ENCODE measurements at regions of chr2 and their contacts with region 1.

Region 1: DNA sequence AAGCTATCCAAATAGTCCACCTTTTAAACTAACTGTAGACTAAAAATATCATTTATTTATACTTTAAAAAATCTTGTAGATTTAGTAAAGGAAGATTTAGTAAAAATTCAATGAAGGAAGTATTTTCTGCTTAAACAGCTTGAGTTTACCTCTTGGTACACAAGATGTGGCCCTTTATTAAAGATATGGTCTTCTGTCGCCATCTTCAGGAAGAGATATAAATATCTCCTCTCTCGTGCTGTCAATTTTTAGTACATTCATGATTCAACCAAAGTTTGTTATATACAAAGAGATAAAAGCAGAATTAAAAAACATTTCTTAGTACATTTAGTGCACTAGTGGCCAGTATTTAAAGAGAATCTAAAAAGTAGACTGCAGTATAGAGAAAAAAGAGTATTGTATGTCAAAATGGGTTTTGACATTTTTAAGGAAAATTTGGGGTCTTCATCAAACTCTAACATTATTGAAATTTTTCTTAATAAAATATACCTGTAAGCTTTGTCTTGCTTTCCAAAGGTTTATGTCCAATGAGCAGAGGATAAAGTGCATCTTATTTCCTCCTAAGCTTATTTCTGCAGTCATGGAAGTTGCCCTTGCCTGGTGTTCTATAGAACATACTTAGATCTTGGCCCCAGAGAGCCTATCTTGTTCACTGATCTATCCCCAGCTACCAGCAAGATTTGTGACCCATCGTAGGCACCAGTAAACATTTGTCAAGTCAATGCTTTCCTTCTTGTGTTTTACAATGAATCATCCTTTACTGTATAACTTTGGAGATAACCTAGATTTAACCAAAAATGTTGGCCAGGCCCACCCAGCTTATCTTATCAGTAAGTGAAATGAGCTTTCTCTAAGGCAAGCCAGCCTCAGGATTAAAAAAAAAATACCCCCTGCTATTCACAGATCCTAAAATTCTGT is 18.5 kb upstream of the EML6 start:
- DNase-seq: peak in 6 of 9 donors; percentile 26 to 69 (median 58)
- ATAC-seq: peak; percentile 74
- H3K4me3 ChIP-seq: no peak overlapping the region
- H3K4me3 Mint-ChIP-seq: no peak overlapping the region
- H3K27ac ChIP-seq: no peak overlapping the region
- H3K27ac Mint-ChIP-seq: no peak overlapping the region
- H3K4me1 ChIP-seq: no peaks in the 10 kb centered on the region
- H3K4me1 Mint-ChIP-seq: peaks cover 0 to 18% (median 0%) of the 10 kb centered on the region in 7 donors
- H3K27me3 ChIP-seq: no peaks in the 10 kb centered on the region
- H3K27me3 Mint-ChIP-seq: peaks cover 10 to 59% (median 15%) of the 10 kb centered on the region in 5 donors

Region 2: DNA sequence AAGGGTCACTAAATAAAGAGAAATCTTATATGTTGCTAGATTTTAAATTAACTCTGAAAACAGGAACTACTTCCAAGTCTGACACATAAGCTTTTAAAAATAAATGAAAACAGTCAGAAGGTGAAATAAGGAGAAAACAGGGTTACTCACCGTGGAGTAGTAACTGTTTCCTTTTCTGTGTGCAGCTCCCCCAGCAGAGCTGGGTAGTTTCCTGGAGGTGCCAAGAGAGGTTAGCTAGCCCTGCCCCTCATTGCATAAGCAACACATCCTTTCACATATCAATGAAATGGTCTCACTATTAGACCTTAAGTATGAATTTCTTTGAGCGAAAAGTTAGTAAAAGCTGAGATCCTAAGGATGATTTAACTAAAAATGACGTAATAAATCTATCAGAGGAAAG is 791.2 kb before region 1 on chr2:
- CTCF ChIA-PET with region 1: interaction called, 3 read pairs
- POLR2A ChIA-PET with region 1: no interaction called
- intact Hi-C with region 1: loop called in 1 of 2 experiments (anchors 10 kb)
- DNase-seq: peak in 5 of 9 donors; percentile 16 to 34 (median 21)
- ATAC-seq: peak; percentile 76
- H3K4me3 ChIP-seq: no peak overlapping the region
- H3K4me3 Mint-ChIP-seq: no peak overlapping the region
- H3K27ac ChIP-seq: no peak overlapping the region
- H3K27ac Mint-ChIP-seq: peak overlapping the region in 7 of 9 donors; percentile 25 to 59 (median 51)
- H3K4me1 ChIP-seq: no peaks in the 10 kb centered on the region
- H3K4me1 Mint-ChIP-seq: peaks cover 8 to 14% (median 9%) of the 10 kb centered on the region in 7 donors
- H3K27me3 ChIP-seq: no peaks in the 10 kb centered on the region
- H3K27me3 Mint-ChIP-seq: no peaks in the 10 kb centered on the region

Region 3: GRCh38 chr2:54206596-54206995 is 498.4 kb before region 1 on chr2:
- CTCF ChIA-PET with region 1: interaction called, 6 read pairs
- POLR2A ChIA-PET with region 1: no interaction called
- intact Hi-C with region 1: loop called in 1 of 2 experiments (anchors 1 kb)
- DNase-seq: peak in 2 of 9 donors; percentile 5 to 11
- ATAC-seq: no peak
- H3K4me3 ChIP-seq: no peak overlapping the region
- H3K4me3 Mint-ChIP-seq: no peak overlapping the region
- H3K27ac ChIP-seq: no peak overlapping the region
- H3K27ac Mint-ChIP-seq: no peak overlapping the region
- H3K4me1 ChIP-seq: no peaks in the 10 kb centered on the region
- H3K4me1 Mint-ChIP-seq: peaks cover 3 to 25% (median 13%) of the 10 kb centered on the region in 7 donors
- H3K27me3 ChIP-seq: no peaks in the 10 kb centered on the region
- H3K27me3 Mint-ChIP-seq: no peaks in the 10 kb centered on the region

Region 4: DNA sequence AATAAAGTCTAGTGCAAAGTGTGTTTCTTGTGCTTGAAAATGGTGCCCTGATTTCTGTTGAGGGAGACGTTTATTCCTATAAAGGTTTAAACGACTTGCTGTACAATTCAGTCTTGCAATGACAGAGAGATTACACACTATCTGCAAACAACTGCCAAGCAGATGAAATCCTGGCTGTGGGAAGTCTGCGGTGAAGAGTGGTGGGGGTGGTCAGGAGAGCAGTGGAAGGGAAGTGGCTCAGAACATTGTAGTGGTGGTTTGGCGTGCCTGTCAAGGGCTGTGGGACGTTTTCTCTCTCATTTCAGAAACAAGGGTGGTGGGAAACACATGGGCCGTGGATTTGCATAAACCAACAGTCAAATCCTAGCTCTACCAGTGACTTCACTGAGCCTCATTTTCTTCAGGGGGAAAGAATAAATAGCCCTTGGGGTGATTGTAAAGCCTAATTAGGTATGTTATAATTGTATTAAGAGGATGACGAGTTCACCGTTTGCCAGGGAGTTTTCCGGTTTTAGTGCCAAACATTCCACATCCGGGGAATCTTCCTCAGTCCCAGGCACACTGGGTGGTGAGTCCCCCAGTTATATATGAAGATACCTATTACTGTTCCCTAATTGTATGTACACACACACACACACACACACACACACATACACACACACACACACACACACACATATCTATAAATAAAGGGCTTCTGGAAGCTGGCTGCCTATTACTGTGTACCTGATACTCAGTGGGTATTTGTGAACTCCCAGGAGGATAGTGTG is 133.8 kb before region 1 on chr2:
- CTCF ChIA-PET with region 1: interaction called, 4 read pairs
- POLR2A ChIA-PET with region 1: no interaction called
- intact Hi-C with region 1: loop called in 1 of 2 experiments (anchors 1 kb)
- DNase-seq: peak in 8 of 9 donors; percentile 61 to 84 (median 68)
- ATAC-seq: peak; percentile 24
- H3K4me3 ChIP-seq: peak overlapping the region; percentile 58
- H3K4me3 Mint-ChIP-seq: peak overlapping the region; percentile 72 to 94 (median 88)
- H3K27ac ChIP-seq: peak overlapping the region; percentile 95
- H3K27ac Mint-ChIP-seq: peak overlapping the region; percentile 90 to 99 (median 97)
- H3K4me1 ChIP-seq: peaks cover 76 to 91% of the 10 kb centered on the region in 2 donors
- H3K4me1 Mint-ChIP-seq: peaks cover 68 to 100% (median 93%) of the 10 kb centered on the region in 7 donors
- H3K27me3 ChIP-seq: no peaks in the 10 kb centered on the region
- H3K27me3 Mint-ChIP-seq: no peaks in the 10 kb centered on the region

Region 5: DNA sequence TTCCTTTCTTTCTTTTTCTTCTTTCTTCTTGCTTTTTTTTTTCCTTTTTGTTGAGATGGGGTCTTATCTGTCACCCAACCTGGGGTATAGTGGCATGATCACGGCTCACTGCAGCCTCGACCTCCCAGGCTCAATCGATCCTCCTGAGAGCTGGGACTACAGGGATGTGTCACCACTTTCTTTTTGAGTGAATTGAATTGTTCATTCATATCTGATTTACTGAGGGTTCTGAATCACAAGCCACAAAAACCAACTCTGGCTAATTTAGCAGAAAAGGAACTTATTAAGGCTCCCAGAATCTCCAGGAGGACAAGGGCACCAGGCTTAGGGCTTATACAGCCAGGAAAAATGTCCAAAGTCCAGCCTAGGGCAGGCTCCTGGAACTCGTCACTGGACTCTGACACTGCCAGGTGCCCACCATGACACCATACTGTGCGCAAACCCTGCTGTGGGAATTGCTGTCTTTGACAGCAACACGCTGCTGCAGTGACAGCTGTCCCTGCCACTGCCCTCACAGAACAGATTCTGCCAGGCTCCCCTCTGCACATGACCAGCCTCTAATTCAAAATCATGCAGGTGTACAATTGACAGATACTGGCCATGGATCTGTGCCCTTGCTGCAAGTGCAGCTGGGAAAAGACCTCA is 24.4 kb before region 1 on chr2:
- CTCF ChIA-PET with region 1: no interaction called
- POLR2A ChIA-PET with region 1: no interaction called
- intact Hi-C with region 1: loop called in 1 of 2 experiments (anchors 2 kb)
- DNase-seq: peak in 1 of 9 donors; percentile 53
- ATAC-seq: peak; percentile 24
- H3K4me3 ChIP-seq: no peak overlapping the region
- H3K4me3 Mint-ChIP-seq: peak overlapping the region in 1 of 10 donors; percentile 91
- H3K27ac ChIP-seq: no peak overlapping the region
- H3K27ac Mint-ChIP-seq: peak overlapping the region in 1 of 9 donors; percentile 82
- H3K4me1 ChIP-seq: no peaks in the 10 kb centered on the region
- H3K4me1 Mint-ChIP-seq: peaks cover 4 to 58% (median 7%) of the 10 kb centered on the region in 7 donors
- H3K27me3 ChIP-seq: no peaks in the 10 kb centered on the region
- H3K27me3 Mint-ChIP-seq: peaks cover 0 to 51% (median 4%) of the 10 kb centered on the region in 5 donors

Region 6: GRCh38 chr2:55175254-55176025 is 470.5 kb after region 1 on chr2:
- CTCF ChIA-PET with region 1: no interaction called
- POLR2A ChIA-PET with region 1: no interaction called
- intact Hi-C with region 1: loop called in 1 of 2 experiments (anchors 2 kb)
- DNase-seq: peak in 7 of 9 donors; percentile 40 to 69 (median 63)
- ATAC-seq: peak; percentile 96
- H3K4me3 ChIP-seq: no peak overlapping the region
- H3K4me3 Mint-ChIP-seq: peak overlapping the region in 7 of 10 donors; percentile 0 to 49 (median 24)
- H3K27ac ChIP-seq: no peak overlapping the region
- H3K27ac Mint-ChIP-seq: peak overlapping the region in 5 of 9 donors; percentile 2 to 69 (median 46)
- H3K4me1 ChIP-seq: no peaks in the 10 kb centered on the region
- H3K4me1 Mint-ChIP-seq: peaks cover 0 to 10% (median 8%) of the 10 kb centered on the region in 7 donors
- H3K27me3 ChIP-seq: no peaks in the 10 kb centered on the region
- H3K27me3 Mint-ChIP-seq: no peaks in the 10 kb centered on the region